ENCODE measurements at regions of chr18 and their contacts with region 1.

Region 1: GRCh38 chr18:74242438-74243096 is 49.2 kb downstream of the CYB5A start:
- DNase-seq: peak in 2 of 3 donors; percentile 30 to 67
- ATAC-seq: peak; percentile 82 to 84
- H3K4me3 ChIP-seq: peak overlapping the region; percentile 38
- H3K27ac ChIP-seq: no peak overlapping the region
- H3K4me1 ChIP-seq: no peaks in the 10 kb centered on the region
- H3K27me3 ChIP-seq: no peaks in the 10 kb centered on the region

Region 2: GRCh38 chr18:74013955-74014354 is 228.6 kb before region 1 on chr18:
- intact Hi-C with region 1: no loop called
- DNase-seq: peak in 1 of 3 donors; percentile 25
- ATAC-seq: no peak
- H3K4me3 ChIP-seq: no peak overlapping the region
- H3K27ac ChIP-seq: no peak overlapping the region
- H3K4me1 ChIP-seq: no peaks in the 10 kb centered on the region
- H3K27me3 ChIP-seq: no peaks in the 10 kb centered on the region

Region 3: DNA sequence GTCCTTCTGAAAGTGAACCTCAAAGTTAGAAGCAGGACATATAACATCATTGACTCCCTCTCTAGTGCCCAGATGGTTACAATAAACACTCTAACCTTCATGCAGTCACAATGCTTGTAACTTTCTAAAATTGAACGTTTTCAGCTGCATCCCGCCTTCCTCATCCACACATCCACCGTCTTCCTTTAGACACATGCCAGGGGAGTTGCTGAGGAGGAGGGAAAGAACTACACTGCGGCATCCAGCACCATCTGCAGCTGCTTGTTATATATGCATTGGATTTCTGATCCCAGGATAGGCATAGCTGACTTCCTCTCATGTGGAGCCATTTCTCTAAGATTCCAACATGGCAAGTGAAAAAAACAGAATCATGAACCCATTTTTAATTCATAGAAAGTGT is 191.8 kb before region 1 on chr18:
- intact Hi-C with region 1: no loop called
- DNase-seq: no peak
- ATAC-seq: no peak
- H3K4me3 ChIP-seq: no peak overlapping the region
- H3K27ac ChIP-seq: no peak overlapping the region
- H3K4me1 ChIP-seq: no peaks in the 10 kb centered on the region
- H3K27me3 ChIP-seq: no peaks in the 10 kb centered on the region

Region 4: DNA sequence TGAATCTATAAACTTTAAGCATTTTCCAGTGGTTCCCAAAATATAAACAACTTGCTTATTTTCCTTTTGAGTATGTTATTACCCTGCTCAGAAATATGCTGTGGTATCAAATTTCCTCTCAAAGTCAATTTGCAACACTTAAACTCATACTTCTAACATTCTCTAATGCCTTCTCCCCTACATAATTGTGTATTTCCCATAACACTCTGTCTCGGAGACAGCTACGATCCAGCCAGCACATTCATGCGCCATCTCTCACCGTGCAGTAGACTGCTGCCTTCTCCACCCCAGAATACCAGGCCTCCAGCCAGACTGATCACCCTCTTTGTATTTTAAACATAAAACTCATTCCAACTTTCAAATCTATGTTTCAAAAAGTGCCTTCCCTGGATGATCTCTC is 52.5 kb before region 1 on chr18:
- intact Hi-C with region 1: no loop called
- DNase-seq: no peak
- ATAC-seq: peak; percentile 43 to 64
- H3K4me3 ChIP-seq: no peak overlapping the region
- H3K27ac ChIP-seq: no peak overlapping the region
- H3K4me1 ChIP-seq: no peaks in the 10 kb centered on the region
- H3K27me3 ChIP-seq: no peaks in the 10 kb centered on the region

Region 5: DNA sequence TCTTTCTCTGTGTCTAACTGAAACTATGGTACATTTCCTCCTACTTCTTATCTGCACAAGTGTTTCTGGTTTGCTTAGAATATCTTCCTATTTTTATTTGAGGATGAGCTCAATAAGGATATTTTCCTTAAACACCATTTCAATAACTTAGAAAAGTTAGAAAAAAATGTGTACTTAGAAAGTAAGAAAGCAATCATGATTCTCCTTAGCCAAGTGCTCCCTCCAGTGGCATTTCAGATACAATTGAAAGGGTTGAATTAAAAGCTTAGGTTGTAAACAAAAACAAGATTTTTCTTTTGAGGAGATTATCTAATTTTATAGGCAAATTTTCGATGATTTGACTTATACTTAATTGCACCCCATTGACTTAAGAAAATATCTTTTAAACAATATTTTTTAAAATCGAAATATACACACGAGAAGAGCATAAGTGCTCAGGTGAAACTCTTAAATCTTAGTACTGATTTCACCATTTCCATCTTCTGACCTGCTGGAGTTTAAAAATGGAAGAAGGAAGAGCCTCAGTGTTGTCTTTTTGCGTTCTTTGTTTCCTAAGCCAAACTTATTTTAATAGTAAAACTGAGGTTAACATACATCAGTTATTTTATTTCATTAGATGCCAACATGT is 100.0 kb after region 1 on chr18:
- intact Hi-C with region 1: loop called in 3 of 4 experiments (anchors 5 to 10 kb)
- DNase-seq: no peak
- ATAC-seq: no peak
- H3K4me3 ChIP-seq: no peak overlapping the region
- H3K27ac ChIP-seq: no peak overlapping the region
- H3K4me1 ChIP-seq: no peaks in the 10 kb centered on the region
- H3K27me3 ChIP-seq: no peaks in the 10 kb centered on the region

Measured in right cardiac atrium (tissue), 5 donors.